Posterior cingulate gyrus (tissue), 11 donors: ENCODE measurements at regions of chr6 and their contacts with region 1.

Region 1: DNA sequence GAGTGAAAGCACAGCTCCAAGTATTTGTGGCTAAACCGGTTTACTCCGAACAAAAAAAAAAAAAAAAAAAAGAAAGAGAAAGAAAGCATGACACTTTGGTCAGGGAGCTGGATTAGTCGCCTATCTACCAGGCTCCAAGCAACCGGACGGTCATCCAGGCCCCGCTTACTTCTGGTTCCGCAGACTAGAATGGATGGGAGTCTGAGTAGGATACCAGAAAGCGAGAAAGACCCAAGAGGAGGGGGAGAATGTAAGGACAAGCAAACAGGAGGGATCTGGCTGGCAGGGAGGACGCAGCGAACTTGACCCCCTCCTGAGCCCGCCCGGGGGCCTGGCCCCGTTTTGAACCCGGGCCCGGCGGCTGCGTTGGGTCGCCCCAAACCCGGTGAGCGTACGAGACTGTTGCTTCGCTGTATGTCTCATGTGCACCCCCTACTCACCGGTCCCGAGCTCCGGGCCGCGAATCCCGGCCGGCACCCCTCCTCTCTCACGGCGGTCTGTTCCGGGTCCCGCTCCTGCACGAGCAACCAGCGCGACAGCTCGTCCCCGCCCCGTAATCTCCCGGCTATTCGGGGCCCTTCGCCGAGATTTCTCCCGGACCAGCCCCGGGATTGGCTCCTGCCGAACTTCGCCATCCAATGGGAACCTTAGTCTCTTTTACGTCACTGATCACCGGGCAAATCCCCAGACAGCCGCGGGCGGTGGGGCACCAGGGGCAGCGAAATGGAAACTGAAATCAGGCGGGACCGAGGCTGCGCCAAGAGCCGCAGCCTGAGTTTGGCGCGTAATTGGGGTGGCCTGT is at the start of gene TRIM26:
- DNase-seq: peak; percentile 93 to 99 (median 97)

Region 2: DNA sequence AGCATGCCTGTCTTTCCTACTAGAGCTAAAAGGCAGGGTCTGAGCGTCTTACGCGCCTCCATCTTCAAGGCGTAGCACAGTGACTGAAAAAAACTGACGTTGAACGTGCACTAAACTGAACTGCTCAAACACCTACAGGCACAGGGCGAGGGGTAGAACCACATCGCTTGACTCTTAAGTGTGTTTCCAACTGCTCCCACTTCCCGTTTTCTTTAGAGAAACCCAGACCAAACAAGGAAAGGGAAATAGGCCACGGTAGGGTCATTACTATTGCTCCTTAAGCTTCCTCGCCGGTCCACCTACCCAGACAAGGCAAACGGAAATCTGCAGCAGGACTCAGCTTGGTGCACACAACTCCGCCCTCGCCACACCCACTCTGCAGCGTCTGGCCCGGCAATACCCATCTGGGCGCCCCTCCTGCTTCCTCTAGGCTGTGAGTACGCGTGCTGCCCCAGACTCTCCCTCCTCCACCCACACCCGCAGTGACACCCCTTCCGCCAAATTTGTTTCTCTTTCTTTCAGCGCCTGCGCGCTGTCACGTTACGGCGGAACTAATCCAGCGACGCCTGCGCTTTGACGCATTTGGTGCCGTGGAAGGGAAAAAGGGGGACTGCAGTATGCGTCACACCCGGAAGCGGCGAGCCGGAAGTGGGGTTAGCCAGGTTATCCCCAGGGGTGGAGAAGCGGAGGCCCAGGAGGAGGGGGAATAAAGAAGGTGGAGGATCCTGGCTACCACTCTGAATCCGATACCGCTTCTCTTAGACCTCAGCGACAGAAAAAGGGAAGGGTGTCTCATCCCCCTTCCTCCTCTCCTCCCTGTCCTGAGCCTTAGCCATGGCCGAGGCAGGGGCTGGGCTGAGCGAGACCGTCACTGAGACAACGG is 146.2 kb before region 1 on chr6 and contains the start of gene PPP1R11:
- intact Hi-C with region 1: loop called (anchors 10 kb)
- DNase-seq: peak; percentile 98 to 100 (median 99)

Region 3: GRCh38 chr6:30102970-30103874 is 109.8 kb before region 1 on chr6:
- intact Hi-C with region 1: loop called (anchors 10 kb)
- DNase-seq: peak; percentile 56 to 96 (median 82)

Region 4: DNA sequence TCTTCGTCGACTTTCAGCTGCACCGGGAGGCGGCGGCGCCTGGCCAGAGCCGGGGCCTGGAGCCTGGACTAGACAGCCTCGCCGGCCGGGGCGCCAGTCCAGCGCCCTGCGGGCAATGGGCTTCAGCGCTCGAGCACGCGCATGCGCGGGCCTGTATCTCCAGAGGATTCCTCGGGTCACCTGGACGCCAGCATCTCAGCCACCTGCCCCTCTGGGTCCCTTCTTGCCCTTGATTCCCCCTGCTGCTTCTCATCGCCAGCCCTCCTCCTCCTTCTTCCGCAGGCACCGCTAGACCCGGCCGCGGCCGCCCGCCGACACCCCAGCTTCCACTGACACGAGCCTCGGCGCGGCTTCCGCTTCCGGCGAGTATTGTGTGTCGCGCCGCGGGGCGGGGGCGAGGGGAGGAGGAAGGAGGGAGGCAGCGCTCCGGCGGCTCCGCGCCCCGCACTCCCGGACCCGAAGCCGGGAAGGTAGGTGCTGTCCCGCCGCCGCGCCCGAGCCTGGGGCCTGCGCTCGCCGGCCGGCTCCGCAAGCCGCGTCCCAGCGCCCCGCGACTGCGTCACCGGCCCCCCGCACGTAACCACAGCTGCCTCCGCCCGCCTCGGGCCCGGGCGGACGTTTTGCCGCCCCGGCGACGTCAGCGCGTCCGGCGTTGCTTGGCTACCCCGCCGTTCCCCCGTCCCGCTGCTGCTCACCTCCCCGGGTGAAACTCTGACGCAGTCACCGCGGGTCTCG is 113.6 kb after region 1 on chr6 and contains the start of gene TRIM39:
- intact Hi-C with region 1: loop called (anchors 5 kb)
- DNase-seq: peak; percentile 76 to 98 (median 88)

Region 5: GRCh38 chr6:30344868-30345671 is 132.0 kb after region 1 on chr6 and contains the start of gene RPP21:
- intact Hi-C with region 1: loop called (anchors 5 kb)
- DNase-seq: peak; percentile 81 to 99 (median 91)